GM13976 (cell line): ENCODE measurements at regions of chr1 and their contacts with region 1.

Region 1: DNA sequence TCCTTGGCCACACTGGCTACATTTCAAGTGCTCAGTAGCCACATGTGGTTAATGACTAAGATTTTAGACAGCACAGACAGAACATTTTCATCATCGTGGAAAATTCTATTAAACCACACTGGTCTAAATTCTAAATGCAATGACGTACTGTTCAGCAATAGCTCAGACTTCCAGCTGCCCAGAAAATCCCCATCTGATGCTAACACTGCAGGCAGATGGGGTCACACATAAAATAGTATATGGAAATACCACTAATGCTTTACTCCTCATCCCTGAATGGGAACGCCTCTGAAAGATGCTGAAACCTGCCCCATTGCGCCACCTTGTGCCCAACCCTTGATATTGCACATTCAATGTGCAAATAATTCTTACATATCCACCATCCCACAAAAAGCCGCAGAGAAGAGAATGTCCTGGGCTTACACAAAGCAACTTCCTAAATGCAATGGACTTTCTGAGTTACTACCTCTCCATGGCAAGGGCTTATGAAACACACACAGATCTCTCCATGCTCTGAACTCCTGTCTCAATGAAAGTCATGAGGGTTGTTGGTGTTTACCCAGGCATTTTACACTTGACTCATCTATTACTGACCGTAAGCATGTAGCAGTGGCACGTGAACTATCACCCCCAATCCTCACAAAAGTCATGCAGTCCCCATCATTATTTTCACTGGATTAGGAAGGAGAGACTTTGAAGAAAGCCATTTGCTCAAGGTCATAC is 20.3 kb upstream of the SLC5A9 start:
- DNase-seq: peak; percentile 51
- CTCF ChIP-seq: peak; percentile 83

Region 2: DNA sequence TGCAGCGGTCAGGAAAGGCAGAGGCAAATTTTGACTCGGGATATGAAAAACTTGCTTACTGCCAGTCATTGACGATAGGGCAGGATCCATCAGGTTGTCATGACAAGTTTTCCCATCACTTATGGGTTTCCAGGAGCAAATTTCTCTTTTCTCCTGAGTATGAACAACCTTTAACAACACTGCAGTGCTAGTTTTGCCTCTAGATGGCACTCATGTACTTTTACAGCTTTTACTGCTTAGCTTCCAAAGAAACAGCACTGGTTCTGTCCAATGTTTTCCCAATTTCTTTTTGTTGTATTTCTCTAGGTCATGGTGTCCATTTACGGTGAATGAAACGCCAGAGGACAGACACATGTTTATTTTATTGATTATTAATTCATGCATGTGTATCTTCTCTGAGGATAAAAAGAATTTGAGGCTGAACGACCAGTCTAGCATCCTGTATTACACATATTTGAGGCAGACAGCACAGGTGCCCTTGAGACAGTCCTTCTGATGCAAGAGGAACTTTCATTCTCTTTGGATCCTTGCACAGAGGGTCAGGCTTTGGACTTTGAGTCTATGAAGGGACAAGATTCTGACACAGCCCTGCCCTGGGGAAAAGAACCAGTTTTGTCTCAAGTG is 92.7 kb before region 1 on chr1:
- in situ Hi-C with region 1: loop called (anchors 5 kb)
- DNase-seq: no peak
- CTCF ChIP-seq: peak; percentile 46